H1 (cell line): ENCODE measurements at regions of chr5 and their contacts with region 1.

Region 1: GRCh38 chr5:138083702-138084101 is at the start of gene WNT8A:
- DNase-seq: no peak
- H3K4me3 ChIP-seq: no peak within 1 kb of the TSS
- H3K27ac ChIP-seq: no peak within 1 kb of the TSS
- H3K4me1 ChIP-seq: peaks cover 0 to 7% (median 2%) of the 10 kb centered on the region in 4 experiments; a peak in 4 of 7 replicates
- H3K27me3 ChIP-seq: peaks cover 0 to 6% (median 3%) of the 10 kb centered on the region in 4 experiments; a peak in 5 of 7 replicates
- CTCF ChIP-seq: no peak
- EP300 ChIP-seq: no peak
- POLR2A ChIP-seq: no peak
- RAD21 ChIP-seq: no peak
- total RNA-seq, gene WNT8A: 0.27 TPM in 1 of 2 replicates, not detected in the other

Region 2: GRCh38 chr5:138095100-138095907 is 11.6 kb after region 1 on chr5:
- CTCF ChIA-PET with region 1: interaction called, 35 read pairs
- POLR2A ChIA-PET with region 1: interaction called, 4 read pairs
- DNase-seq: peak in 1 of 2 experiments; percentile 55
- H3K4me3 ChIP-seq: peak overlapping the region in 1 of 4 experiments; percentile 48; a peak in 3 of 8 replicates
- H3K27ac ChIP-seq: no peak overlapping the region
- H3K4me1 ChIP-seq: peaks cover 13 to 27% (median 26%) of the 10 kb centered on the region in 4 experiments
- H3K27me3 ChIP-seq: peaks cover 46 to 74% (median 65%) of the 10 kb centered on the region in 4 experiments
- CTCF ChIP-seq: no peak
- EP300 ChIP-seq: peak in 1 of 2 experiments; percentile 66; a peak in 1 of 3 replicates
- POLR2A ChIP-seq: no peak
- RAD21 ChIP-seq: no peak

Region 3: GRCh38 chr5:138102454-138103318 is 19.0 kb after region 1 on chr5:
- CTCF ChIA-PET with region 1: interaction called, 23 read pairs
- POLR2A ChIA-PET with region 1: no interaction called
- DNase-seq: no peak
- H3K4me3 ChIP-seq: peak overlapping the region in 2 of 4 experiments; percentile 5 to 11; a peak in 3 of 8 replicates
- H3K27ac ChIP-seq: no peak overlapping the region
- H3K4me1 ChIP-seq: peaks cover 0 to 9% (median 3%) of the 10 kb centered on the region in 4 experiments; a peak in 3 of 7 replicates
- H3K27me3 ChIP-seq: peaks cover 7 to 23% (median 9%) of the 10 kb centered on the region in 4 experiments
- CTCF ChIP-seq: no peak
- EP300 ChIP-seq: no peak
- POLR2A ChIP-seq: no peak
- RAD21 ChIP-seq: no peak

Region 4: GRCh38 chr5:138258704-138259292 is 175.1 kb after region 1 on chr5:
- CTCF ChIA-PET with region 1: no interaction called
- POLR2A ChIA-PET with region 1: no interaction called
- DNase-seq: no peak
- H3K4me3 ChIP-seq: no peak overlapping the region
- H3K27ac ChIP-seq: no peak overlapping the region
- H3K4me1 ChIP-seq: no peaks in the 10 kb centered on the region
- H3K27me3 ChIP-seq: no peaks in the 10 kb centered on the region
- CTCF ChIP-seq: no peak
- EP300 ChIP-seq: no peak
- POLR2A ChIP-seq: no peak
- RAD21 ChIP-seq: no peak